Sciatic nerve (tissue), 2 donors: ENCODE measurements at regions of chr19 and their contacts with region 1.

Region 1: DNA sequence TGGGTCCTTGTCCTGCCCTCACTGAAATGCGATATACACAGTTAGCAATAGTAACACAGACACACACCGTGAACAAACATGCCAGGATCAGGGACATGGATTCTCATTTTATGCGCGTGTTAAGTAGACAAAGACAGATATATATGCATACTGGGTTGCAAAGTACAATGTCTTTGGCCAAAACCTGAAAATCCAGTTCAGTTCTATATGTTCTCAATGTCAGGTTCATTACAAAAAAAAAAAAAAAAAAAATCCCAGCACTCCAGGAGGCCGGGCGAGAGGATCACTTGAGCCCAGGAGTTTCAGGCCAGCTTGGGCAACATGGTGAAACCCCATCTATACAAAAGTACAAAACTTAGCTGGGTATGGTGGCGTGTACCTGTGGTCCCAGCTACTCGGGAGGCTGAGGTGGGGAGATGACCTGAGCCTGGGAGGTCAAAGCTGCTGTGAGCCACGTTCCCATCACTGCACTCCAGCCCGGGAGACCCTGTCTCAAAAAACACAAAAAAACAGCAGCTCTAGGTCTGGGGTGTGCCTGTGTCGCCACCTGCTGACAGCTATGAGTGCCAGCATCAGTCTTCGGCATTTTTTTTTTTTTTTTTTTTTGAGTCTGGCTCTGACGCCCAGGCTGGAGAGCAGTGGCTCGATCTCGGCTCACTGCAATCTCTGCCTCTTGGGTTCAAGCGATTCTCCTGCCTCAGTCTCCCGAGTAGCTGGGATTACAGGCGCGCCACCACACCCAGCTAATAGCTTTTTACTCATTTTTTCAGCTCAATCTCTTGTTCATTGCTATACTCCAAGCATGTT is 10.3 kb downstream of the AP2S1 start:
- DNase-seq: no peak
- ATAC-seq: peak; percentile 79

Region 2: DNA sequence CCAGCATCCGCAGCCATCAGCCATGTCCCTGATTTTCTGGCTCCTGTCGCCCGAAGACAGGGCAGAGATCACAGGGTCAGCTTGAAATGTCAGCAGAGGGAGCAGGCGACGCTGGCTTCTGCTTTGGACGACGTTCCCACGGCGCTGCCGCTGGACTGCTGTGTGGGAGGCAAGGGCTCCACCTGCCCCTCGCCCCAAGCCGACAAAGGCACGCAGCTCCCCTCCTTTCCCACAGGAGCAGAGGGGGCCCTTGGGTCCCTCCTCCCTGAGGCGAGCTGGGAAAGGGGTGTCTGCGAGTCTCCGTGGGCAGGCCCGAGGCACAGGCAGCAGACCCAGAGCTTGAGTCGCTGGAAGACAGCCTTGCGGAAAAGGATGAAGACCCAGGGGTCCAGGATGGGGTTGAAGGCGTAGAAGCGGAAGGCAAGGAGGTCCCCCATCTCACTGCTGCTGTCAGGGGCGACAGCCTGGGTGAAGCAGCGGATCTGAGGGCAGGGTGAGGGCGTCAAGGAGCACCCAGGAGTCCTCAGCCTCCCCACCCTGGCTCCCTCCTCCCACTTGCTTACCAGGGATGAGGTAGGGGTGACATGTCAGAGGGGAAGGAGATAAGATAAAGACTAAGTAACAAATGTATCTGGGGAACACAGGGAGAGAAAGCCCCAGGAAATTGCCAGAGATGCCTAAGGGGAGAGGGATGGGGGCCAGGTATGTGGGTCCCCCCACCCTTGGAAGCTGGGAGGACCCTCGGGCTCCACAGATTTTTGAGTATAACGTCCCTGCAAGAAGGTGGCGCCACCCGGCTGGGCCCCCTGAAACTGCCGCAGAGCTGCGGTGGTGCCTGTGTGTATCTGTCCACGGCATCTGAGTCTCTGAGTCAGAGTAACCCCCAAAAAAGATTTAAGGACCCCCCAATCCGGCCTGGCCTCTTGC is 218.9 kb before region 1 on chr19:
- intact Hi-C with region 1: loop called (anchors 1 kb)
- DNase-seq: no peak
- ATAC-seq: no peak

Region 3: GRCh38 chr19:46756544-46756888 is 83.8 kb before region 1 on chr19:
- intact Hi-C with region 1: loop called (anchors 2 kb)
- DNase-seq: no peak
- ATAC-seq: no peak

Region 4: GRCh38 chr19:46878613-46879375 is 38.5 kb after region 1 on chr19:
- intact Hi-C with region 1: no loop called
- DNase-seq: no peak
- ATAC-seq: no peak